ENCODE measurements at regions of chr15 and their contacts with region 1.

Region 1: GRCh38 chr15:89177633-89178306 is 43.6 kb downstream of the RLBP1 start:
- DNase-seq: no peak
- H3K4me3 ChIP-seq: no peak overlapping the region
- H3K27ac ChIP-seq: peak overlapping the region; percentile 49
- H3K4me1 ChIP-seq: peaks cover 10% of the 10 kb centered on the region
- H3K27me3 ChIP-seq: no peaks in the 10 kb centered on the region
- CTCF ChIP-seq: peak; percentile 85 to 91 (median 86)
- POLR2A ChIP-seq: no peak

Region 2: DNA sequence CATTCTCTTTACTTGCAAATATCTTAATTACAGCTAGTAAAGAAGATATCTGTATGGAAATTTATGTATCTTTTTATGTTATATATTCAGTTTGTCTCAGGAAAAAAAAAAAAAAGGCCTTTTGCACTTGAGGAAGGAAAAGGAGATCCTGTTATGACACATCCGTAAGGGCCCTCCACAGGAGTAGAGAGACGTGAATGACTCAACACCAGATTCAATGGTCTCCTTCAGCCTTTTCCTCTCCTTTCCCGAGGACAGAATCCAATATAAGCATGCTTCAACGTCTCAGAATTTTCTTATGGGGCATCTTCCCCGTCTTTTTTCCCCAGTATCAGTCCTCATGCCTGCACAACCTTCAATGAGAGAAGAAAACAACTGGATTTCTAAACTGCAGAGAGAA is 1261.6 kb before region 1 on chr15:
- intact Hi-C with region 1: no loop called
- DNase-seq: no peak
- H3K4me3 ChIP-seq: no peak overlapping the region
- H3K27ac ChIP-seq: no peak overlapping the region
- H3K4me1 ChIP-seq: no peaks in the 10 kb centered on the region
- H3K27me3 ChIP-seq: no peaks in the 10 kb centered on the region
- CTCF ChIP-seq: no peak
- POLR2A ChIP-seq: no peak

Region 3: GRCh38 chr15:88894348-88894818 is 283.4 kb before region 1 on chr15:
- intact Hi-C with region 1: loop called (anchors 5 kb)
- DNase-seq: no peak
- H3K4me3 ChIP-seq: peak overlapping the region; percentile 53 to 54
- H3K27ac ChIP-seq: no peak overlapping the region
- H3K4me1 ChIP-seq: peaks cover 53% of the 10 kb centered on the region
- H3K27me3 ChIP-seq: no peaks in the 10 kb centered on the region
- CTCF ChIP-seq: peak; percentile 51 to 57 (median 57)
- POLR2A ChIP-seq: no peak

Region 4: GRCh38 chr15:88904624-88905327 is 273.0 kb before region 1 on chr15:
- intact Hi-C with region 1: loop called (anchors 5 kb)
- DNase-seq: no peak
- H3K4me3 ChIP-seq: no peak overlapping the region
- H3K27ac ChIP-seq: peak overlapping the region; percentile 89
- H3K4me1 ChIP-seq: peaks cover 73% of the 10 kb centered on the region
- H3K27me3 ChIP-seq: no peaks in the 10 kb centered on the region
- CTCF ChIP-seq: peak; percentile 96 to 99 (median 96)
- POLR2A ChIP-seq: no peak

Region 5: GRCh38 chr15:89057504-89058133 is 120.2 kb before region 1 on chr15:
- intact Hi-C with region 1: loop called (anchors 5 kb)
- DNase-seq: no peak
- H3K4me3 ChIP-seq: no peak overlapping the region
- H3K27ac ChIP-seq: no peak overlapping the region
- H3K4me1 ChIP-seq: no peaks in the 10 kb centered on the region
- H3K27me3 ChIP-seq: no peaks in the 10 kb centered on the region
- CTCF ChIP-seq: peak; percentile 93 to 99 (median 93)
- POLR2A ChIP-seq: no peak

Region 6: GRCh38 chr15:89367485-89368451 is 190.0 kb after region 1 on chr15:
- intact Hi-C with region 1: no loop called
- DNase-seq: no peak
- H3K4me3 ChIP-seq: no peak overlapping the region
- H3K27ac ChIP-seq: no peak overlapping the region
- H3K4me1 ChIP-seq: peaks cover 34% of the 10 kb centered on the region
- H3K27me3 ChIP-seq: peaks cover 46% of the 10 kb centered on the region
- CTCF ChIP-seq: no peak
- POLR2A ChIP-seq: no peak

Measured in vagina (tissue), 2 donors.